AG04449 (cell line): ENCODE measurements at regions of chr1 and their contacts with region 1.

Region 1: DNA sequence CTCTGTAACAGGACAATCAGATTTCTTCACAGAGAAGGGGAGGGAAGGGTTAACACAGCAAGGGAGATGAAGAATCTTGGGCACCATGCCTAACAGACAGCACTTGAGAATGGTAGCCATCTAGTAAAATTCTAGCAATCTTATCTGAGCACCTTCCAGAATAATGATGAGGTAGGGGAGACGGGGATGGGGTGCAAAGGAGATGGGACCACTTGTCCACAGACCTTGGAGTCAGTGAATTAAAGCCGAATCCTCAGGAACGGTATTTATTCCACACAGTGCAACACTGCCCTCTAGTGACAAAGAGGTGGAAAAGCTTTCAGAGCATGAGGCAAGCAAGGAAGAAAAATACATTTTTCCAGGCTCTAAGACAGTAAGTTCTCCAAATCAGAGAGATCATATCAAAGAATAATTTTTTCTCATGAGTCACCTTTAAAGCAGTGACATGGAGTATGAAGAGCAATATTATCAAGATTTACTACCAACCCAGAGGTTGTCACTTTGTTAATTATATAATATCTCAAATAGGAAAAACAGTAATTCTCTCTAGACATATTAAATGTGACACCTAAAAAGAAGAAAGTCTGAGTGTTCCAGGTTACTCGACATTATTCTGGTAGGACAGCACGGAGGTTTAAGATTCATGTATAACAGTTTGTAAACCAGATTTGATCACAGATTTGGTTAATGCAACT is 43.3 kb upstream of the LPAR3 start:
- DNase-seq: no peak
- H3K4me3 ChIP-seq: no peak overlapping the region
- CTCF ChIP-seq: peak; percentile 85

Region 2: GRCh38 chr1:84442256-84442655 is 494.0 kb before region 1 on chr1:
- CTCF ChIA-PET with region 1: interaction called, 24 read pairs
- POLR2A ChIA-PET with region 1: no interaction called
- DNase-seq: peak; percentile 82
- H3K4me3 ChIP-seq: no peak overlapping the region
- CTCF ChIP-seq: peak; percentile 54

Region 3: GRCh38 chr1:84758968-84759491 is 177.2 kb before region 1 on chr1:
- CTCF ChIA-PET with region 1: interaction called, 69 read pairs
- POLR2A ChIA-PET with region 1: no interaction called
- DNase-seq: no peak
- H3K4me3 ChIP-seq: no peak overlapping the region; the same call in 1 of the 2 replicates
- CTCF ChIP-seq: no peak

Region 4: DNA sequence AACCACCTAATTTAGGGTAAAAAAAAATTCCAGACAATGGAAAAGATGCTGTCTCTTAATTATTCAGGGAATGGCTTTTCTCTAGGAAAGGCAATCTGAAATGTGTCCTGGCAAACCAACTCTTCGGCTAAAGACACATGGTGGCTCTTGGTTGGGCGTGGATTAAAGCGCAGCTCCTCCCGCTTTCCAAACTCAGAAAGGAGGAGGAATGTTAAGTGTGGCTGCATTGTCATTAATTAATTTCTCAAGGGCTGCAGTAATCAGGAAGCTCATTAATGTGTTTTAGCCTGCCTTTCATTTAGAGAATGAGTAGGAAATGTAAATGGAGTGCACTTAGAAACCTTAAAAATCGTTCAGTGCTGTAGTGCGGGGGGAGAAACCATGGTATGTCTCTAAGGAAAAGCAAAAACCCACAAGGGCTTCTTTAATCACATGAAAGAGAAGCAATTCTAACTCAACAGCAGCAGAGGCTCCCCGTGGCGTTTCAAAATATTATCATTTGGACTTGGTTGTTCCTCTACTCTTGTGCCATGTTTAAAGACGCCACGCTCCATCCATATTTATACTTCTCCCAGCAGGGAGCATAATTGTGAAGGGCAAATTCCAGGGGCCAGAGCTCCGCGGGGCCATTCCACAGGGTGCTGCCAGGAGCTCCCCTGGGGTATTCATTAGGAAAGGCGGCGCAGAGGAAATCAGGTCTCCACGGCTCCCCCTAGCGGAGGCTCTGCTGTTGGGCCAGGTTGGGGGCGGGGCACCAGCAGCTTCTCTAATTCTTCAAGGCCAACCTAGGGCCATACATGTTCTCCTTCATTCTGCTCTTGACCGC is 154.1 kb before region 1 on chr1:
- CTCF ChIA-PET with region 1: interaction called, 118 read pairs
- POLR2A ChIA-PET with region 1: no interaction called
- DNase-seq: no peak
- H3K4me3 ChIP-seq: no peak overlapping the region
- CTCF ChIP-seq: peak; percentile 77

Region 5: DNA sequence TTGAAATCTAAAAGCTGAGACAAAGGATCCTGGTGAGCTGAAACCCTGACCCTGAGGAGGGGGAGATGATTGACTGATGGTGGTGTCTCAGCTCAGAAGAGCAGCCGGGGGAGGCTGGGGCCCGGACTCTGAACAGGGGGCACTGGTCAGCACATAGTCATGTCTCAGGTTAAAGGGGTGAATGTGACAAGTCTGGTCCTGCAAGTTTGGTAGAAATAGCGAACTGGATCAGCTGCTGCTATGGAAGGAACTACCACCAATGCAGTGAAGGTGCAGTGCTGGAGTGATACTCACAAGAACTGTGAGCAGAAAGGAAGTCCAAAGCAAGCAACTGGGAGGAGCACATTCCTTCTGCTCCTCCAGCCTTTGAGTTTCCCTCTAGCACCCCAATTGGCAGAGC is 147.2 kb before region 1 on chr1:
- CTCF ChIA-PET with region 1: interaction called, 58 read pairs
- POLR2A ChIA-PET with region 1: no interaction called
- DNase-seq: no peak
- H3K4me3 ChIP-seq: no peak overlapping the region
- CTCF ChIP-seq: no peak

Region 6: DNA sequence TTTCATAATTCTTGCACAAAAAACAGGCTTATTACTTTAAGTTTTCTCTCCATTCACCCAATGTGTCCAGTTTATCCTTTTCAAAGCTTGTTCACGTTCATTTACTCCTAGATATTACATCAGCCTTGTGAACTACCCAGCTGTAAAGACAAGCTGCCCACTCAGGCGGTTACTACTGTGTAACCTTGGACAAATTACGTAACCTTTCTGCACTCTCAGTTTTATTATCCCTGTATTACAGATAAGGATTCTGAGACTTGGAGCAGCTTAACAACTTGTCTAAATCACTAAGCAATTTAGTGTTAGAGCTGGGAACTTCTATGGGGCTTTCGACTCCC is 22.7 kb before region 1 on chr1:
- CTCF ChIA-PET with region 1: interaction called, 10 read pairs
- POLR2A ChIA-PET with region 1: no interaction called
- DNase-seq: no peak
- H3K4me3 ChIP-seq: no peak overlapping the region
- CTCF ChIP-seq: no peak

Region 7: GRCh38 chr1:84923317-84923716 is 12.9 kb before region 1 on chr1:
- CTCF ChIA-PET with region 1: interaction called, 15 read pairs
- POLR2A ChIA-PET with region 1: no interaction called
- DNase-seq: no peak
- H3K4me3 ChIP-seq: no peak overlapping the region
- CTCF ChIP-seq: no peak